ENCODE measurements at regions of chr4 and their contacts with region 1.

Region 1: GRCh38 chr4:37891260-37892159 is 626 bp downstream of the TBC1D1 start:
- DNase-seq: peak; percentile 46
- H3K4me3 ChIP-seq: peak overlapping the region; percentile 91 to 99 (median 96)
- H3K27ac ChIP-seq: peak overlapping the region; percentile 90 to 93 (median 92)
- H3K4me1 ChIP-seq: peaks cover 0 to 22% (median 17%) of the 10 kb centered on the region in 4 donors
- H3K27me3 ChIP-seq: no peaks in the 10 kb centered on the region
- CTCF ChIP-seq: peak in 3 of 5 experiments; percentile 7 to 19 (median 8)
- EP300 ChIP-seq: no peak
- POLR2A ChIP-seq: no peak

Region 2: DNA sequence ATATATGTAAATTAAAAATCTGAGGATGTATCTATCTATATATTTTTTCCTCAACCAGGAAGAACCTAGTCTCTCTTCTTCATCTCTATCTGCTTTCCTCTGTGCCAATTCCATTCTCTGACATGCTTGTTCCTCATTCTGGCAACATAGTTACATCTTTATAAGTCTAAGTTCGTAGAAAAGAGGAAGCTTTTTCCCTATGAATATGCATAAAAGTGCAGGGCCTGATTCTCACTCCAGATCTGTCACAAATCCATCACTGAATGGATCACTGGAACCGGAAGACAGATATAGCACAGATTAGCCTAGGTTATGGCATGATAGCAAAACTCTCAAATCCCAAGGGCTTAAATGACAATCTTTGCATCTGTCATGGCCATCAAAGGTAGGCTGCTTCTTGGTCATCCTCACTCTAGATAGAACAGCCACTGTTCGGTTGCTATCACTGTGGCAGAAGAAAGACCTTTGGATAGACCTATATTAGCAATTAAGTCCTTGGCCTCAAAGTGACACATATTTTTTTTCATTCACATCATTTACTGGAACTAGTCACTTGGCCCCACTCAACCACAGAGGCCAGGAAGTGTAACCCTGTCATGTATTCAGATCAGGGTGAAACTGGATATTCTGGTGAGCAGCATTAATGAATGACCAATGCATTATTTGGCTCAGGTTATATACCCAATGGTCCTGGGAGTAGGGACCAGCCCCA is 1587.9 kb before region 1 on chr4:
- in situ Hi-C with region 1: no loop called
- intact Hi-C with region 1: loop called (anchors 5 kb)
- DNase-seq: no peak
- H3K4me3 ChIP-seq: no peak overlapping the region
- H3K27ac ChIP-seq: no peak overlapping the region
- H3K4me1 ChIP-seq: no peaks in the 10 kb centered on the region
- H3K27me3 ChIP-seq: no peaks in the 10 kb centered on the region
- CTCF ChIP-seq: no peak
- EP300 ChIP-seq: no peak
- POLR2A ChIP-seq: no peak

Region 3: DNA sequence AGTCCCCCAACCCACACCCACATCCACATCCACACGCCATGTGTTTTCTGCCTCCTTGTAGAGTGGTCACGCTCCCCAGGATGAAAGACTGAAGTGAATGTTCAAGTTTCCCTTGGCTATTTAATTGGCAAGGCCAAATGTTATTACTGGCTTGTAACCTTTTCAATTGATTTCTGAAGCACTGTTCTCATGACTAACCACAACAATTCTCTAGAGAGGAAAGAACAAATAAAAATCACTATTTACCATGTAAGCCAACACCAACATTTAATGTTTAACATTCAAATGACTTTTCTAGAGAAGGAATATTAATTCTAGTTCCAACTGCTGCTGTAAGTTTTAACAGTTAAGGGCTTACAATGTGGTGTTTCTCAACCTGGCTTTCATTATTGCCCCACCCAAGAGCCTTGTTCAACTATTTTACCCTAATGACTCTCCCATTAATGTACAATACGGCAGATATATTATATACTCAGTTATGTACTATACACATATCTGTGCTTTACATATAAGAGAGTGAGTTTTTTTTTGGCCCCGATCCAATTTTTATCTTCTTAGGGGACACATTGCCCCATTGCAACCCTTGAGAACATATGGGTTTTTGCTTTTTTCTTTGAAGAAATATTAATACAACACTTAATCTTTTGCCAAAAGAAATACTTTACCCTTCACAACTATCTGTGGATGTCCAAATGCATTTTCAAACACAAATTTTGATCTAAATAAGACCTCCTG is 251.8 kb before region 1 on chr4:
- in situ Hi-C with region 1: no loop called
- intact Hi-C with region 1: no loop called
- DNase-seq: no peak
- H3K4me3 ChIP-seq: no peak overlapping the region
- H3K27ac ChIP-seq: no peak overlapping the region
- H3K4me1 ChIP-seq: peaks cover 0 to 4% (median 0%) of the 10 kb centered on the region in 4 donors
- H3K27me3 ChIP-seq: no peaks in the 10 kb centered on the region
- CTCF ChIP-seq: no peak
- EP300 ChIP-seq: no peak
- POLR2A ChIP-seq: no peak

Region 4: GRCh38 chr4:37826295-37827029 is 65.0 kb before region 1 on chr4 and contains the start of gene PGM2:
- in situ Hi-C with region 1: no loop called
- intact Hi-C with region 1: loop called (anchors 5 kb)
- DNase-seq: peak; percentile 92
- H3K4me3 ChIP-seq: peak within 1 kb of the TSS; percentile 67 to 81 (median 74)
- H3K27ac ChIP-seq: peak within 1 kb of the TSS; percentile 85 to 90 (median 88)
- H3K4me1 ChIP-seq: peaks cover 13 to 26% (median 21%) of the 10 kb centered on the region in 4 donors
- H3K27me3 ChIP-seq: no peaks in the 10 kb centered on the region
- CTCF ChIP-seq: peak in 2 of 5 experiments; percentile 10 to 17
- EP300 ChIP-seq: no peak
- POLR2A ChIP-seq: peak; percentile 91
- total RNA-seq, gene PGM2: 5.8 to 21.0 (median 14.7) TPM

Region 5: DNA sequence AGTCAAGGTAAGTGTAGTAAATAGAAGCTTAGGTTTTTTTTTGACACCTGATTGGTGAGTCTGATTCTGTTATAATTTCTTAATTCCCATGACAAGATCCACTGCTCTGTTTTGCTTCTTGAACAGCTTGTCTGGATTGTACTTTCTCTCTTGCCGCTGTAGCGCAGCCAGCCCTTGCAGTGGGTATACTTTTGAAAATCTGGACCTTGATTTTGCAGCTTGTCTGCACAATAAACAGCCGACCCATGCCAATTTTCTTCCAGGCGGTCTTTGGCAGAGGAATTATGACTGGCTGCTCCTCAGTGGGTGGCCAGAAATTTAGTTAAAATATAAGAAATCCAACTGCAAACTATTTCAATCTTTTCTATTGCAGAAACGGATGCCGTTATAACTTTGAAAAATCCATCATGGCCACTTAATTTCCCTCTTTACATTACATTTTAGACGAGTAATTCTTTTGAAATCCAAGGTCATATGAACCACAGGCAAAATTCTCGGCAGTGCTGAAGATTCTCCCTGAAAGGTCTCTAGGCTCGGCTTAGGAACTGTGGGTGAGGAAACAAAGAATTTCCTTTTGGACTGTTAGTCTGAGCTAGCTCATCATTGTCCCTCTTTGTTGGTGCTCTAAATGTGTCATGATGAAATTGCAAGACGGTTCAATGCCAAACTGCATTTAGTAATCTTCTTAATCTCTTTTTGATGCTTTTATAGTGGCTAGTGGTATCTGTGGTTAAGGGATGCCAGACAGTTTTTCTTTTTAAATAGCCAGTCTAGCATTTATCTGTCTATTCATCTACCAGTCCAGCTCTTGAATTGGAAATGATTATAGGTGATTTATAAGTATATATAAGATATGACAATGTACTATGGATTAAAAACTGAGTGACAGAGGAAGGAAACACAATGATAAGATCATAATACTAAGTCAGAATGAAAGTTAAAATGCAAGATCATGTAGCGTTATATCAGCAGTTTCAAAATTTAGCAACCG is 37.2 kb after region 1 on chr4:
- in situ Hi-C with region 1: no loop called
- intact Hi-C with region 1: no loop called
- DNase-seq: no peak
- H3K4me3 ChIP-seq: no peak overlapping the region
- H3K27ac ChIP-seq: peak overlapping the region in 1 of 4 donors; percentile 8
- H3K4me1 ChIP-seq: peaks cover 0 to 6% (median 2%) of the 10 kb centered on the region in 4 donors
- H3K27me3 ChIP-seq: no peaks in the 10 kb centered on the region
- CTCF ChIP-seq: no peak
- EP300 ChIP-seq: no peak
- POLR2A ChIP-seq: no peak

Region 6: GRCh38 chr4:37977471-37978247 is 86.1 kb after region 1 on chr4:
- in situ Hi-C with region 1: no loop called
- intact Hi-C with region 1: loop called (anchors 2 kb)
- DNase-seq: peak; percentile 84
- H3K4me3 ChIP-seq: peak overlapping the region; percentile 53 to 93 (median 80)
- H3K27ac ChIP-seq: peak overlapping the region; percentile 94 to 98 (median 96)
- H3K4me1 ChIP-seq: peaks cover 4 to 51% (median 41%) of the 10 kb centered on the region in 4 donors
- H3K27me3 ChIP-seq: no peaks in the 10 kb centered on the region
- CTCF ChIP-seq: peak; percentile 64 to 78 (median 67)
- EP300 ChIP-seq: no peak
- POLR2A ChIP-seq: peak; percentile 28

Region 7: GRCh38 chr4:38013461-38014366 is 122.2 kb after region 1 on chr4:
- in situ Hi-C with region 1: loop called in 1 of 4 experiments (anchors 25 kb)
- intact Hi-C with region 1: no loop called
- DNase-seq: no peak
- H3K4me3 ChIP-seq: no peak overlapping the region
- H3K27ac ChIP-seq: peak overlapping the region; percentile 2 to 74 (median 44)
- H3K4me1 ChIP-seq: peaks cover 0 to 38% (median 7%) of the 10 kb centered on the region in 4 donors
- H3K27me3 ChIP-seq: no peaks in the 10 kb centered on the region
- CTCF ChIP-seq: no peak
- EP300 ChIP-seq: no peak
- POLR2A ChIP-seq: no peak

Region 8: DNA sequence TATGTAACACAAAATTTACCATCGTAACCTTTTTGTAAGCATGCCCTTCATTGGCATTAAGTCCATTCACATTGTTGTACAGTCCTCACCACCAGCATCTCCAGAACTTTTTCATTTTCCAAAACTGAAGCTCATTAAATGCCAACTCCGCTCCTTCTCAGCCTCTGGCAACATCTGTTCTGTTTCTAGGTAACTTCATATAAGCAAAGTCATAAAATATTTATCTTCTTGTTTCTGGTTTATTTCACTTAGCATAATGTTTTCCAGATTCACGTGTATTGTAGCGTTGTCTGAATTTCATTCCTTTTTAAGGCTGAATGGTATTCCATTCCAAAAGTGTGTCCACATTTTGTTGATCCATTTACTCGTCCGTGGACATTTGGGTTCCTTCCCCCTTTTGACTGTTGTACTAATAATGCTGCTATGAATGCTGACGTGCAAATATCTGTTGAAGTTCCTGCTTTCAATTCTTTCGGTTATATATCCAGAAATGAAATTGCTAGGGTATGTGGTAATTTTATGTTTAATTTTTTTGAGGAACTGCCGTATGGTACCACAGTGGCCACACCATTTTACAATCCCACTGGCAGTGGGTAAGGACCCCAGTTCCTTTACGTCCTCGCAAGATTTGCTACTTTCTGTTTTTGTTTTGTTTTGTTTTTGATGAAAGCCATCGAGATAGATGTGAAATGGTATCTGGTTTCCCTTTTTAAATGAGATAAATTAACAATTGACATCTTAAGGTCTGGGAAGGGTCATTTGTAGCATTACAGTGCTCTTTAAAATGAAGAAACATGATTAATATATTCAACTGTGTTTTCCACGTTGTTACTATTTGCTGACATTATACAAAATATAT is 132.1 kb after region 1 on chr4:
- in situ Hi-C with region 1: loop called in 2 of 4 experiments (anchors 25 kb)
- intact Hi-C with region 1: loop called (anchors 5 kb)
- DNase-seq: no peak
- H3K4me3 ChIP-seq: no peak overlapping the region
- H3K27ac ChIP-seq: peak overlapping the region; percentile 61 to 76 (median 68)
- H3K4me1 ChIP-seq: peaks cover 0 to 22% (median 0%) of the 10 kb centered on the region in 4 donors
- H3K27me3 ChIP-seq: no peaks in the 10 kb centered on the region
- CTCF ChIP-seq: no peak
- EP300 ChIP-seq: peak; percentile 55
- POLR2A ChIP-seq: no peak

Region 9: DNA sequence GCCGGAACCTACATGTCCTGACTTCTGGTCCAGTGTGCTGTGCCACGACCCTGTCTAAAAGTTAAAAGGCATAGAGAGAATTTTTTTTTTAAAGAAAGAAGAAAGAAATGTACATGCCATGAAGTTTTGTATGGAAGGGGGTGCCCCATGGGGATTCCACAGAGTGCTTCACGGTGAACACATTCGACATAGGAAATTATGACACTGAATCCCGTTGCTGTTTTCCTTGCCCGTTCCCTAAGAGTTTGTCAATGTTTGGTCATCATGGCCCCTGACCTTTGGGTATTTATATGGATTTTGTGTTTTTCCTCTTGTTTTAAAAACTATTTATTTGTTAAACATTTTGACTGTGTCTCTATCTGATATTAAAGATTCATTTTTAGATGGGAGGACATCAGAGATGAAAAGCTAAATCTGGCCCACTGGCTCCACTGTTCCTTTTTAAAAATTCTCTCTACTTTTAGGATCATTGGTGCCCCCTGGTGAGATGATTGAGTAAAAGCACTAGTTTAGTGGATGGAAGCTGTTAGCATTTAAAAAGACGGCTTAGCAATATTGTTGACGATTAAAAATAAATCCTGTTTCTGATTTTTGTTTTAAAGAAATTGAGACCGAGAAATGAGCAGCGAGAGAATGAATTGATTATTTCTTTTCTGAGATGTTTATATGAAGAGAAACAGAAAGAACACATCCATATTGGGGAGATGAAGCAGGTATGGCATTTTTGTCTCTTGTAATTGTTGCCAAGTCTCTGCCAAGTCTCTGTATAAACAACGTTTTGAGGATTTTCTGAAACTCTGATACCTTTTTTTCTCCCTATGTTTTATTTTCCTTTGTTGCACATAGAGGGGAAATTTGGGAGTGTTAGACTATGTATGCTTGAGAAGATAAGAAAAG is 143.7 kb after region 1 on chr4:
- in situ Hi-C with region 1: loop called in 1 of 4 experiments (anchors 25 kb)
- intact Hi-C with region 1: no loop called
- DNase-seq: no peak
- H3K4me3 ChIP-seq: no peak overlapping the region
- H3K27ac ChIP-seq: peak overlapping the region in 3 of 4 donors; percentile 4 to 33 (median 17)
- H3K4me1 ChIP-seq: peaks cover 0 to 5% (median 2%) of the 10 kb centered on the region in 4 donors
- H3K27me3 ChIP-seq: no peaks in the 10 kb centered on the region
- CTCF ChIP-seq: peak; percentile 65 to 86 (median 68)
- EP300 ChIP-seq: no peak
- POLR2A ChIP-seq: no peak